Caco-2 (cell line): ENCODE measurements at regions of chr6 and their contacts with region 1.

Region 1: DNA sequence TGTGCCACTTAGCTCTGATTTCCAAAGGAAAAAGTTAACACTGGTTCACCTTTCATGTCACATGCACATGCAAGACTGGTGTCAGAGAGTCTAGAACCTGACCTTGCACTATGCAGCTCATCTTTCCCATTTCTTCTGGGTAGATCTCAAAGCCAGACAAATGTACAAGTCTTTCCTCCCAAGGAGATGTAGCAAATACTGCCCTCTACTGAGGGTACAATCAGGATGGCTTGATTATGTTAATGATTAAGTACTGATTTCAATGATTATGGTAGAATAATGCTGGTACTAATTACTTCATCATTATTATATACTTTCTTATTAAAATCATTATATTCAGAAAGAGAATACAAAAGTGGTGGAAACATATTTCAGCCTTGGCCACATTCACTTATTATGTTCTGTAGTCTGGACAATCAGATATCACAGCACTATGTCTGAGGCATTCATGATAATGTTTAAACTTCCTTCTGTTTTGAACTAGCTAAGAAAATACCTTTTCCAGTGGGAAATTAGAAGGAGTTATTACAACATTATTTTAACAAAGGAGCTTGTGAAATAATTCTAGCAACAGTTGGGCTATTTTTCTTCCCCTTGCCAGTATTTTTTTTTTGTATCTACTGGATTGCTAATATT is 68.5 kb upstream of the FOXO3 start:
- DNase-seq: peak in 1 of 2 experiments; percentile 35
- H3K4me3 ChIP-seq: no peak overlapping the region
- H3K4me3 Mint-ChIP-seq: no peak overlapping the region
- H3K27ac Mint-ChIP-seq: no peak overlapping the region
- H3K4me1 ChIP-seq: no peaks in the 10 kb centered on the region
- H3K4me1 Mint-ChIP-seq: no peaks in the 10 kb centered on the region
- H3K27me3 ChIP-seq: no peaks in the 10 kb centered on the region
- H3K27me3 Mint-ChIP-seq: no peaks in the 10 kb centered on the region
- CTCF ChIP-seq: peak in 1 of 2 experiments; percentile 67

Region 2: GRCh38 chr6:108113557-108114519 is 378.4 kb before region 1 on chr6:
- CTCF ChIA-PET with region 1: interaction called, 5 read pairs
- POLR2A ChIA-PET with region 1: no interaction called
- intact Hi-C with region 1: loop called (anchors 1 kb)
- DNase-seq: peak in 1 of 2 experiments; percentile 67
- H3K4me3 ChIP-seq: no peak overlapping the region
- H3K4me3 Mint-ChIP-seq: no peak overlapping the region
- H3K27ac Mint-ChIP-seq: no peak overlapping the region
- H3K4me1 ChIP-seq: no peaks in the 10 kb centered on the region
- H3K4me1 Mint-ChIP-seq: peaks cover 7% of the 10 kb centered on the region
- H3K27me3 ChIP-seq: no peaks in the 10 kb centered on the region
- H3K27me3 Mint-ChIP-seq: no peaks in the 10 kb centered on the region
- CTCF ChIP-seq: peak; percentile 49 to 60

Region 3: GRCh38 chr6:108174371-108175175 is 317.7 kb before region 1 on chr6:
- CTCF ChIA-PET with region 1: interaction called, 3 read pairs
- POLR2A ChIA-PET with region 1: no interaction called
- intact Hi-C with region 1: loop called (anchors 10 kb)
- DNase-seq: no peak
- H3K4me3 ChIP-seq: no peak overlapping the region
- H3K4me3 Mint-ChIP-seq: peak overlapping the region; percentile 72
- H3K27ac Mint-ChIP-seq: no peak overlapping the region
- H3K4me1 ChIP-seq: no peaks in the 10 kb centered on the region
- H3K4me1 Mint-ChIP-seq: no peaks in the 10 kb centered on the region
- H3K27me3 ChIP-seq: no peaks in the 10 kb centered on the region
- H3K27me3 Mint-ChIP-seq: no peaks in the 10 kb centered on the region
- CTCF ChIP-seq: no peak

Region 4: DNA sequence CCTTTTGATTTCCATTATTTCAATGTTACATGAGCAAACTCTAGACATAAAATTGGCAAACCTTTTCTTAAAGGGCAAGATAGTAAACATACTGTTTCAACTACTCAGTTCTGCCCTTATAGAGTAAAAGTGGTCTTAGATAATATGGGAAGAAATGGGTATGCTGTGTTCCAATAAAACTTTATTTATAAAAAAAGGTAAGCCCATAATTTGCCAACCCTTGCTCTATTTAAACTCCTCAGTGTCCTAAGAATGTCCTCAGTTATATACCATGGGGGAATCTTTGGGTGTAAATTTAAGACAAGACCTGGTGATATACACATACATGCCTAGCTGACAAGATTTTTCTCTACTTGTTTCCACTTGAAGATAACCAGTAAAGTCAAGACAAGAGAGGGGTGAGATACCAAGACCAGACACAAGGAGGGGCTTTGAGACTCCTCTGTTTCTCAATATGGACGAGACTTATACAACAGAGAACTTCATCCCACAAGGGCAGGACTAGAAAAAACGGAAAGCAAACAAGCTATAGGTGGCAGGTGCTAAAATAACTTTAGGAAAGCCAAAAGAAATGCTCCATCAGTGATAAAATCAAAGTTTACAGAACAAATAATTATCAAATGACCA is 241.9 kb before region 1 on chr6:
- CTCF ChIA-PET with region 1: interaction called, 4 read pairs
- POLR2A ChIA-PET with region 1: no interaction called
- intact Hi-C with region 1: loop called (anchors 1 kb)
- DNase-seq: peak; percentile 41 to 49
- H3K4me3 ChIP-seq: no peak overlapping the region
- H3K4me3 Mint-ChIP-seq: no peak overlapping the region
- H3K27ac Mint-ChIP-seq: no peak overlapping the region
- H3K4me1 ChIP-seq: no peaks in the 10 kb centered on the region
- H3K4me1 Mint-ChIP-seq: peaks cover 20% of the 10 kb centered on the region
- H3K27me3 ChIP-seq: no peaks in the 10 kb centered on the region
- H3K27me3 Mint-ChIP-seq: no peaks in the 10 kb centered on the region
- CTCF ChIP-seq: peak in 1 of 2 experiments; percentile 50

Region 5: DNA sequence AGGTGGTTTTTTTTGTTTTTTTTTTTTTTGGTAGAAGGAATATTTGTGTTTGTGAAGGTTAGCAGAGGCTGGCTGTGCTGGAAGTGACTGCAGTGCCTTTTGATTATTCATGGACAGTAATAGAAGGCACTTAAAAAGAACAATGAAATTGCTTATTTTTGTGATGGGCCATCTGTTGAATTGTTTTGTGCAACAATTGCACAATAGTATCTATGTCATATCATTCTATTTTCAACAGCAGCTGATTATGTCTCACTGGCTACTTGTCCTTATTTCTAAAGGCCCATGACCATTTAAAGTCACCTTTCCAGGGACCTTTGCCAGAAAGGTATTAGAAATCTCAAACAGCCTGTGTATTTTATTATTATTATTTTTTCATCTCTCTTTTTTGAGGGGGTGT is 126.8 kb before region 1 on chr6:
- CTCF ChIA-PET with region 1: interaction called, 3 read pairs
- POLR2A ChIA-PET with region 1: no interaction called
- intact Hi-C with region 1: loop called (anchors 5 kb)
- DNase-seq: no peak
- H3K4me3 ChIP-seq: no peak overlapping the region
- H3K4me3 Mint-ChIP-seq: no peak overlapping the region
- H3K27ac Mint-ChIP-seq: no peak overlapping the region
- H3K4me1 ChIP-seq: no peaks in the 10 kb centered on the region
- H3K4me1 Mint-ChIP-seq: no peaks in the 10 kb centered on the region
- H3K27me3 ChIP-seq: no peaks in the 10 kb centered on the region
- H3K27me3 Mint-ChIP-seq: no peaks in the 10 kb centered on the region
- CTCF ChIP-seq: no peak